Activated naive CD8-positive, alpha-beta T cell treated with anti-CD3 and anti-CD28 coated beads, Interleukin-2, amount 10 ng/mL, durations not matched to agents 7 days and 5 days (primary cell): ENCODE measurements at regions of chr15 and their contacts with region 1.

Region 1: DNA sequence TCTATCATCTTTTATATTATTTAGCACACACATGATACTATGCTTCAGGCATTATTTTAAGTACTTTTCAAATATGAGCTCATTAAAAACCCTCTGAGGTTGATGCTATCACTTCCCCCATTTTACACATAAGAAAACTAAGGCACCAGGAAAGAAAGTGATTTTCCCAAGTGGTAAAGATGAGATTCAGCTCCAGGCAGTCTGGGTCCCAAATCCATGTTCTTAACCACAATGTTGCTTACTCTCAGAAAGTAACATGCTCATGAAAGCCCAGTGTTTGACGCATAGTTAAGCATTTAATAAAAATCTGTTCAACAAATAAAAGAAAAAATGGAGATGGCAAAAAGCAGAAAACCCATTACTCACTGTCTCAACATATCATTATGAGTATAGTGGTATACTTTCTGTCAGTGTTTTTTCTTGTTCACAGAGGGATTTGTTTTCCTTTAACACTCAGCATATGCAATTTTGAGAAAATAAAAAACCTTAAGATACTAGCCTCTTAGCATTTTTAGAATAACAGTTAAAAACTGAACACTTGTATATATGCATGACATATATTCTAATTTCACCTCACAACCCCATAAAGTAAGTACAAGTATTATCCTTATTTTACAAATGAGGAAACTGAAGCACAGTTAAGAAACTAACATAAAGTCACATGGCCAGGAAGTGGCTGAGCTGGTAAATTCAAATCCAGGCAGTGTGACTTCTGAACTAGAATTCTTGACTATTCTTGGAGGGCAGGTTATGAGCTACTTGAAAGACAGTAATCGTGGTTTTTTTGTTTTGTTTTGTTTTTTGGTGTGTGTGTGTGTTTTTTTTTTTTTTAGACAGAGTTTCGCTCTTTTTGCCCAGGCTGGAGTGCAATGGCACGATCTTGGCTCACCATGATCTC is 10.4 kb downstream of the PEAK1 start:
- DNase-seq: no peak
- ATAC-seq: peak; percentile 100
- H3K4me3 Mint-ChIP-seq: peak overlapping the region; percentile 61
- H3K27ac Mint-ChIP-seq: peak overlapping the region; percentile 88
- H3K4me1 Mint-ChIP-seq: peaks cover 41% of the 10 kb centered on the region
- H3K27me3 Mint-ChIP-seq: no peaks in the 10 kb centered on the region

Region 2: DNA sequence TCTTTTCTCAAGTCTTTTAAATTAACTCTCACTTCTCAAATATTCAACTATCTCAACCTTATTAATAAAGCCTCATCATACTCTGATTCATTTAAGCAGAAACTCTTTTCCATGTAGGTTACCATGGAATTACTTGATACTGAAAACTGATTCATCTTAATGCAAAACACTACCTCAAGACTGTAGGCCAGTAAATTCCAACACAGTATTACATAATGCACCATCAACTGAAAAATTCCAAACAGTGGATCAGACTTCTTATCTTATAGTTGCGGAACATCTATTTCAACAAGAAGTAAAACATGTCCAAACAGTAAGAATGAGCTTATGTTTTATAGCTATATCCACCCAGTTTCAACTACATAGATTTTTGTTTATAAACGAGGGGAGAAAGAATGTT is 114.1 kb before region 1 on chr15:
- POLR2A ChIA-PET with region 1: no interaction called
- DNase-seq: no peak
- ATAC-seq: no peak
- H3K4me3 Mint-ChIP-seq: no peak overlapping the region
- H3K27ac Mint-ChIP-seq: no peak overlapping the region
- H3K4me1 Mint-ChIP-seq: no peaks in the 10 kb centered on the region
- H3K27me3 Mint-ChIP-seq: no peaks in the 10 kb centered on the region

Region 3: GRCh38 chr15:77419836-77420609 is 10.5 kb after region 1 on chr15 and contains the start of gene PEAK1:
- POLR2A ChIA-PET with region 1: interaction called, 21 read pairs
- DNase-seq: peak; percentile 98
- ATAC-seq: peak; percentile 97
- H3K4me3 Mint-ChIP-seq: peak within 1 kb of the TSS; percentile 99
- H3K27ac Mint-ChIP-seq: peak within 1 kb of the TSS; percentile 99
- H3K4me1 Mint-ChIP-seq: peaks cover 35% of the 10 kb centered on the region
- H3K27me3 Mint-ChIP-seq: no peaks in the 10 kb centered on the region
- total RNA-seq, gene PEAK1: 34.0 to 38.1 TPM